ENCODE measurements at regions of chr14 and their contacts with region 1.

Region 1: DNA sequence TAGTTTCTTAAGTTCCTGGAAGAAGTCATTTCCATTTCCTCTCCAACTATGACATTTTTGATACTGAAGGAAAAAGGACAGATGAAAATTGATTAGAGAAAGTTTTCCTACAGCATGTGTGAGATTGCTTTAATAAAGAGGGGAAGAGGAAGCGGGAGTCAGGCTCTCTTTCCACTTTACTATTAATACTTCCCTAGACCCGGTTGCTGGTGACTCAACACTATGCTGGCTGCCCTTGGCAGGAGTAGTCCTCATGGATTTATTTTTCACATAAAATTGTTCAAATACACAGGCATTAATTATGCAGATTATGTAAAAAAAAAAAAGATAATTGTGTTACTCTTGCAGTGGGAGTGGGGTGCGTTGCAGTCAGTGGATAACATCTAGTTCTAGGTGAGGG is 293.4 kb downstream of the EGLN3 start:
- DNase-seq: peak; percentile 32
- ATAC-seq: peak; percentile 71
- H3K4me3 ChIP-seq: no peak overlapping the region
- H3K27ac ChIP-seq: no peak overlapping the region
- H3K4me1 ChIP-seq: peaks cover 25% of the 10 kb centered on the region
- H3K27me3 ChIP-seq: no peaks in the 10 kb centered on the region
- CTCF ChIP-seq: no peak

Region 2: DNA sequence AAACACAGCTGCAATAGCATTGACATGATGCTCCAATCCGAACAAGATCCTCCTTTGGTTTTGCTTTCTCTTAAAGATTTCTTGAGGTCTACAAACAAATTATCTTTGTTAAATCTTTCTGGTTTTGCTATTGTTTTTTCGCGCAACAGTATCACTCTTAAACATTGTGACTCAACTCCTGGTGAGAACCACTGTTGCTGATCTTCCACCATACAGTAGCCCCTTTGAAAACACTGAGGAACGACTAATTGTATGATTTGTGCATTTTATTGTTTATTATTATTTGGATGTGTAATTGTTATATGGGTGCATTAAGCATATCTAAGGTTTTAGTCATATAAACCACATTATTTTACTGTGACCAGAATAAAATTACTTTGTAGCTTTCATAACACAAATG is 10.6 kb after region 1 on chr14:
- CTCF ChIA-PET with region 1: no interaction called
- POLR2A ChIA-PET with region 1: no interaction called
- intact Hi-C with region 1: loop called (anchors 1 kb)
- DNase-seq: peak; percentile 69
- ATAC-seq: peak; percentile 94
- H3K4me3 ChIP-seq: no peak overlapping the region
- H3K27ac ChIP-seq: 0 out of 2 replicates have a peak overlapping the region, but pooled peaks have one; percentile 13
- H3K4me1 ChIP-seq: peaks cover 25% of the 10 kb centered on the region; the same call in 1 of the 2 replicates
- H3K27me3 ChIP-seq: no peaks in the 10 kb centered on the region
- CTCF ChIP-seq: no peak

Region 3: GRCh38 chr14:33714527-33715222 is 57.2 kb after region 1 on chr14:
- CTCF ChIA-PET with region 1: no interaction called
- POLR2A ChIA-PET with region 1: no interaction called
- intact Hi-C with region 1: loop called (anchors 2 kb)
- DNase-seq: peak; percentile 43
- ATAC-seq: peak; percentile 88
- H3K4me3 ChIP-seq: no peak overlapping the region
- H3K27ac ChIP-seq: no peak overlapping the region
- H3K4me1 ChIP-seq: peaks cover 9% of the 10 kb centered on the region
- H3K27me3 ChIP-seq: no peaks in the 10 kb centered on the region
- CTCF ChIP-seq: no peak

Region 4: GRCh38 chr14:33738497-33738896 is 81.0 kb after region 1 on chr14:
- CTCF ChIA-PET with region 1: no interaction called
- POLR2A ChIA-PET with region 1: no interaction called
- intact Hi-C with region 1: no loop called
- DNase-seq: no peak
- ATAC-seq: no peak
- H3K4me3 ChIP-seq: no peak overlapping the region
- H3K27ac ChIP-seq: no peak overlapping the region
- H3K4me1 ChIP-seq: peaks cover 23% of the 10 kb centered on the region
- H3K27me3 ChIP-seq: no peaks in the 10 kb centered on the region
- CTCF ChIP-seq: no peak